SK-N-SH (cell line): ENCODE measurements at regions of chr14 and their contacts with region 1.

Region 1: DNA sequence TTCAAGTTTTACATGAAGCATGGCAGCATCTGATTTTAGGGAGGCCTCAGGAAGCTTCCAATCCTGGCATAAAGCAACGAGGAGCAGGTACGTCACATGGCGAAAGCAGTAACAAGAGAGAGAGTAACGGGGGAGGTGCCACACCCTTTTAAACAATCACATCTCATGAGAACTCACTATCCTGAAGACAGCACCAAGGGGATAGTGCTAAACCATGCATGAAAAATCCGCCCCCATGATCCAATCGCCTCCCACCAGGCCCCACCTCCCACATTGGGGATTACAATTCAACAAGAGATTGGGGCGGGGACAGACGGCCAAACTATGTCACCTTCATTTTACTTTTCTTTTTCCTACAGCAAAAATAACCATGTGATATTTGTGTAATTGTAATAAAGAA is 7.2 kb upstream of the MAP3K9 start:
- DNase-seq: no peak
- H3K4me3 ChIP-seq: no peak overlapping the region
- H3K27ac ChIP-seq: no peak overlapping the region
- H3K4me1 ChIP-seq: peaks cover 0 to 6% of the 10 kb centered on the region in 2 experiments; a peak in 1 of 4 replicates
- H3K27me3 ChIP-seq: no peaks in the 10 kb centered on the region
- CTCF ChIP-seq: no peak
- EP300 ChIP-seq: no peak
- RAD21 ChIP-seq: no peak

Region 2: GRCh38 chr14:70700952-70701585 is 115.5 kb before region 1 on chr14:
- CTCF ChIA-PET with region 1: no interaction called
- POLR2A ChIA-PET with region 1: no interaction called
- DNase-seq: no peak
- H3K4me3 ChIP-seq: no peak overlapping the region
- H3K27ac ChIP-seq: no peak overlapping the region
- H3K4me1 ChIP-seq: peaks cover 0 to 6% of the 10 kb centered on the region in 2 experiments; a peak in 2 of 4 replicates
- H3K27me3 ChIP-seq: peaks cover 4% of the 10 kb centered on the region; the same call in 1 of the 2 replicates
- CTCF ChIP-seq: no peak
- EP300 ChIP-seq: no peak
- RAD21 ChIP-seq: no peak

Region 3: GRCh38 chr14:70714055-70714621 is 102.4 kb before region 1 on chr14:
- CTCF ChIA-PET with region 1: interaction called, 11 read pairs
- POLR2A ChIA-PET with region 1: no interaction called
- DNase-seq: peak; percentile 50
- H3K4me3 ChIP-seq: no peak overlapping the region
- H3K27ac ChIP-seq: no peak overlapping the region
- H3K4me1 ChIP-seq: peaks cover 4 to 9% of the 10 kb centered on the region in 2 experiments; a peak in 3 of 4 replicates
- H3K27me3 ChIP-seq: no peaks in the 10 kb centered on the region
- CTCF ChIP-seq: peak; percentile 84
- EP300 ChIP-seq: no peak
- RAD21 ChIP-seq: peak; percentile 68

Region 4: DNA sequence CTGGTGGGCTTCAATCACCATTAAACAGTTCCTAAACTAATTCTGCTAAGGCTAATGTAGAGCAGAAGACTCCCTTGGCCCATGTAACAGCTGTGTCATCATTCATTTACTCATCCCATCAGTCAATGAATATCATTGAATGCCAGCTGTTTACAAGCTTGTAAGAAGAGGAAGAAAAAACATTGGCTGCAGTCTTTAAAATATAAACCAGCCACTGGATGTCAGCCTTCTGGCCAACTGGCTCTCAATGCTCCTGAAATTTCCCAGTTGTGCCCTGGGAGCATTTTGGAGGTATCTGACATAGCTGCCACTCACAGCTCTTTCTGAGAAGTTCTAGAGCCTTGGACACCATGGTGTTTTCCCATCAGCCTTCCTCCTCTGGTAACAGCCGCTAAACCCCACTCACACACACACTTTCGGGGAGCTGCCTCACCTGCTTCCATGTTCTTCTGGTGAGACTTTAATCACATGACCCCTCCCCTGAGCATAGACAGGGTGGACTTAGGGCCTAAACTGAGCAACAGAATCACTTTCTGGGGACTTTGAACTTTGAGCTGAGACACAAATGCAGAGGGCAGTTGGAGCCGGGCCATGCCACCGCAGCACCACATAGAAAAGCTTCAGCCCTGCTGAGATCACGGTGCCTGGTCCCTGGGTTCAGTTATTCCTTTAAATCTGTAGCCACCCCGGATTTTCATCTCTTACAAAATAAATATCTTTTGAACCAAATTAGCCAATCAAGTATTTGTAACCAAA is 11.0 kb after region 1 on chr14:
- CTCF ChIA-PET with region 1: interaction called, 16 read pairs
- POLR2A ChIA-PET with region 1: interaction called, 3 read pairs
- DNase-seq: no peak
- H3K4me3 ChIP-seq: no peak overlapping the region
- H3K27ac ChIP-seq: no peak overlapping the region
- H3K4me1 ChIP-seq: peaks cover 0 to 3% of the 10 kb centered on the region in 2 experiments; a peak in 2 of 4 replicates
- H3K27me3 ChIP-seq: no peaks in the 10 kb centered on the region
- CTCF ChIP-seq: no peak
- EP300 ChIP-seq: no peak
- RAD21 ChIP-seq: no peak

Region 5: GRCh38 chr14:70955543-70956480 is 139.3 kb after region 1 on chr14:
- CTCF ChIA-PET with region 1: interaction called, 41 read pairs
- POLR2A ChIA-PET with region 1: no interaction called
- DNase-seq: peak; percentile 25
- H3K4me3 ChIP-seq: 0 out of 4 replicates have a peak overlapping the region, but pooled peaks of 1 of the 2 experiments have one; percentile 8
- H3K27ac ChIP-seq: no peak overlapping the region
- H3K4me1 ChIP-seq: peaks cover 0 to 10% of the 10 kb centered on the region in 2 experiments; a peak in 2 of 4 replicates
- H3K27me3 ChIP-seq: no peaks in the 10 kb centered on the region
- CTCF ChIP-seq: peak; percentile 84
- EP300 ChIP-seq: no peak
- RAD21 ChIP-seq: peak; percentile 82